Psoas muscle (tissue), 8 donors: ENCODE measurements at regions of chr11 and their contacts with region 1.

Region 1: GRCh38 chr11:95577716-95578460 is 211.7 kb downstream of the FAM76B start:
- DNase-seq: no peak
- ATAC-seq: no peak
- H3K4me3 ChIP-seq: no peak overlapping the region
- H3K27ac ChIP-seq: no peak overlapping the region
- H3K4me1 ChIP-seq: no peaks in the 10 kb centered on the region
- H3K27me3 ChIP-seq: no peaks in the 10 kb centered on the region
- CTCF ChIP-seq: no peak

Region 2: DNA sequence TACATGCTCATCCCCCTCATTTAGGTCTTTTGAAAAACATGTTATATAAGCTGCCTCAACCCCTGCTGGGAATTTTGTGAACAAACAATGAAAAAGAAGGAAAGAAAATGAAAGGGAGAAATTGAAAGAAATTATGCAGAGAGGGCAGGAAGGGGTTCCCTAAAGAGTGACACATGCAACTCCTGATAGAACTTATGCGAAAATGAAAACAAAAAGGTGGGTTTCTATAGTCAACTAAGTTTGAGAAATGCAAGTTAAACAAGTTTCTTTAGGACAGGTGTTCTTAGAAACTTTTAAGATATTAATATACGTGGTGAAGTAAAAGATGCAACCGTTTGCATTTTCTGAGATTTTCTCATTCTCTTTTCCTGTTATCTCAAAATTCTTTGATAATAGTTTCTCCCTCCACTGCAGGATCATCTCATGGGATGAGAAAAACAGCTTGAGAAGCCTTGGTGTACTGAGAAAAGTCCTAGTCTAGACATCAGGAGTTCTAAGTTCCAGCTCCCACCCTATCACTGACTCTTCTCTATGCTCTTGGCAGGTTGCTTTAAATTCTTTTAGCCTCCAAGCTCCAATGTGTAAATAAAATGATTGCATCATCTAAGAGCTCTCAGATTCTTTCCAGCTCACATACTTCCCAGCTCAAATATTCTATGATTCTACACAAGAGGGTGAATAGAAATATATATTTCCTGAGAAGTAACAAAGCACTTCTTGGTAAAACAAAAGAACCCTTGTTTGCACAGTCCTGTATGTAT is 102.5 kb after region 1 on chr11:
- intact Hi-C with region 1: loop called in 1 of 2 experiments (anchors 10 kb)
- DNase-seq: no peak
- ATAC-seq: no peak
- H3K4me3 ChIP-seq: no peak overlapping the region
- H3K27ac ChIP-seq: peak overlapping the region; percentile 10
- H3K4me1 ChIP-seq: peaks cover 16% of the 10 kb centered on the region
- H3K27me3 ChIP-seq: no peaks in the 10 kb centered on the region
- CTCF ChIP-seq: no peak